ENCODE measurements at regions of chr3 and their contacts with region 1.

Region 1: DNA sequence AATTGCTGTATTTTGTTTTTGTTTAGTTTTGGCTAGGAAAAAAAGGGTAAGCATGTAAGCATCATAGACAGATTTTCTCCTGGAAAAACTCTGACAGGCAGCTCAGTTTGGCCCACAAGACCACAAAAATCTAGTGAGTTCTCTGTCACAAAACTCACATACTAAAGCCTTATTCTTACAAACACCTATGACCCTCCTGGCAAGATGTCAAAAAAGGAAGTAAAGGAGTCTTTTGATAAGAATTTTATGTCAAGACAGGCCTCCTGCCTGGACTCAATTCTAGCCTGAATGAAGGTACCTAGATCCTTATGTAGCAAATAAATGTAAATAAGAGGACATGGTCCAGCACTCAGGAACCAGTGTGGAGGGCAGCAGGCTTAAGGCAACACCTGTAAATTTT is 668.3 kb upstream of the ZNF385D start:
- DNase-seq: no peak
- H3K4me3 ChIP-seq: no peak overlapping the region
- H3K27ac ChIP-seq: no peak overlapping the region
- H3K4me1 ChIP-seq: no peaks in the 10 kb centered on the region
- H3K27me3 ChIP-seq: no peaks in the 10 kb centered on the region
- CTCF ChIP-seq: no peak

Region 2: DNA sequence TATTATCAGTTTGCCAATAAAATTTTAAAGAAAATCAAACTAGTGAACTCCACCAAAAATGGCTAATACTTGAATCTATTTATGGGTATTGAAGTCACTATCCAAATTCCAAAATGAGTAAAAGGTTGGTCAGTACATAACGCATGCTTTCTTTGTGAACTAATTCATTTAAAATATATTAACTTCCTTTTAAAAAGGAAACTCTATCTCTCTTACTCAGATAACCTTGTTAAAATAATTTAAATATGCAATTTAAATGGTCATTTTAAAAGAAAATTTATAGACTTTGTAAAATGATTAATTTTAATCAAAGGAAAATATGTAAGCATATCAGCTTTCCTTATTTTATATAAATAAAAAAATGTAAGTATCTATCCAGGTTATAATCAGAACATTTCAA is 248.9 kb before region 1 on chr3:
- CTCF ChIA-PET with region 1: no interaction called
- dilution Hi-C with region 1: no loop called
- in situ Hi-C with region 1: no loop called
- intact Hi-C with region 1: no loop called
- DNase-seq: no peak
- H3K4me3 ChIP-seq: no peak overlapping the region
- H3K27ac ChIP-seq: no peak overlapping the region
- H3K4me1 ChIP-seq: no peaks in the 10 kb centered on the region
- H3K27me3 ChIP-seq: no peaks in the 10 kb centered on the region
- CTCF ChIP-seq: no peak

Region 3: DNA sequence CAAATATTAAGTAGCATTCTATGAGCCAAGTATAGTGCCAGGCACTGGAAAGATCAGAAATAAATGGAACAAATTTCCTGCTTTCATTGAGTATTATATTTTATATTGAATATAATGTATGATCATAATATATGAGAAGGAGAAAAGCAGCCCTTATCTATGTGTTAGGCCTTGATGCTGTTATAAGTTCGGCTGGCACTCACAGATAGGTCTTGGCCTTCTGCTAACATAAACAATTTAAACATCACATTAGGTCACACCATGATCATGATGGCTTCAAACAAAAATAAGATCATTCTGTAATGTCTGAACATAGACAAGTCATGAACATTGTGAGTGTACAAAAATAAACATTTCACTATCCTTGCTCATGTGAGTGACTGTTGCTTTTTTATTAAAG is 84.3 kb before region 1 on chr3:
- CTCF ChIA-PET with region 1: no interaction called
- dilution Hi-C with region 1: no loop called
- in situ Hi-C with region 1: no loop called
- intact Hi-C with region 1: loop called (anchors 10 kb)
- DNase-seq: no peak
- H3K4me3 ChIP-seq: no peak overlapping the region
- H3K27ac ChIP-seq: no peak overlapping the region
- H3K4me1 ChIP-seq: no peaks in the 10 kb centered on the region
- H3K27me3 ChIP-seq: no peaks in the 10 kb centered on the region
- CTCF ChIP-seq: no peak

Region 4: DNA sequence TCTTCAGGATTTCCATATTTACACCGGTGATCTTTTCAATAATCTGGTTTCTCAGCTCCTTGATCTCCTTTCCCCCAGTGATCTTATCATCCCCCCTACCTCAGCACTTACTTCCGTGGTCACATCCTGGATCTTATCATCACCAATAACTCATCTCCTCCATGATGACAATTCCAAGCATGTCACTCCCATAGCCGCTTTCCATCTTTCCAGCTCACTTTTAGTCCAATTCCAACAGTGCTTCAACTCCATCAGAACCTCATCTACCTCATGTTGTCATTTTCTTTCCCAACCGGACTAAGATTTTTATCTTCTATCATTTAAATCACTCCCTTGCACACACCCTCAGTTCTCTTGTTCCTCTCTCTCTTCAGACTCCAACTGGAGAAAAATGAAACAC is 707.9 kb after region 1 on chr3:
- CTCF ChIA-PET with region 1: no interaction called
- dilution Hi-C with region 1: no loop called
- in situ Hi-C with region 1: no loop called
- intact Hi-C with region 1: no loop called
- DNase-seq: no peak
- H3K4me3 ChIP-seq: no peak overlapping the region
- H3K27ac ChIP-seq: no peak overlapping the region
- H3K4me1 ChIP-seq: no peaks in the 10 kb centered on the region
- H3K27me3 ChIP-seq: peaks cover 8% of the 10 kb centered on the region
- CTCF ChIP-seq: no peak

Measured in mammary epithelial cell (primary cell).